CD4-positive, alpha-beta memory T cell (primary cell): ENCODE measurements at regions of chr20 and their contacts with region 1.

Region 1: GRCh38 chr20:43537921-43538877 is 20.6 kb upstream of the SGK2 start:
- DNase-seq: peak in 4 of 5 donors; percentile 15 to 25 (median 21)
- H3K4me3 ChIP-seq: no peak overlapping the region
- H3K4me3 Mint-ChIP-seq: no peak overlapping the region
- H3K27ac ChIP-seq: no peak overlapping the region
- H3K27ac Mint-ChIP-seq: peak overlapping the region in 2 of 7 donors; percentile 3 to 4
- H3K4me1 ChIP-seq: no peaks in the 10 kb centered on the region
- H3K4me1 Mint-ChIP-seq: peaks cover 0 to 2% (median 0%) of the 10 kb centered on the region in 4 donors
- H3K27me3 ChIP-seq: no peaks in the 10 kb centered on the region
- H3K27me3 Mint-ChIP-seq: no peaks in the 10 kb centered on the region

Region 2: DNA sequence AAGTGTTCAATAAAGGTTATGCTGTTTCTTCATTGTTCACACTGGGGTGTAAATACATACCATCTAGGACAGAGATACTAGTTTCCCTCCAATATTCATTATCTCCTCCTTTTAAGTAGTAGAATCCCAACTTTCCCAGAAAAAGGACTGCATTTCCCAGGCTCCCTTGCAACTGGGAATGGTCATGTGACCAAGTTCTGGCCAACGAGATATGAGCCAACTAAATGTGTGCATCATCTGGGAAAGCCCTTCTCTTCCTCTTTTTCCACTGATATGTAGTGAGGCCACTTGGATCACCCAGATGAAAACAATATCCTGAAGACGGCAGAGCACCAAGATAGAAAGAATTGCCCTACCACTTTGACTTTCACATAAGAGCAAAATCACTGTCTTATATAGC is 250.6 kb before region 1 on chr20:
- CTCF ChIA-PET with region 1: no interaction called
- POLR2A ChIA-PET with region 1: no interaction called
- intact Hi-C with region 1: no loop called
- DNase-seq: no peak
- H3K4me3 ChIP-seq: no peak overlapping the region
- H3K4me3 Mint-ChIP-seq: no peak overlapping the region
- H3K27ac ChIP-seq: no peak overlapping the region
- H3K27ac Mint-ChIP-seq: no peak overlapping the region
- H3K4me1 ChIP-seq: no peaks in the 10 kb centered on the region
- H3K4me1 Mint-ChIP-seq: no peaks in the 10 kb centered on the region
- H3K27me3 ChIP-seq: no peaks in the 10 kb centered on the region
- H3K27me3 Mint-ChIP-seq: peaks cover 3 to 6% of the 10 kb centered on the region in 2 donors

Region 3: DNA sequence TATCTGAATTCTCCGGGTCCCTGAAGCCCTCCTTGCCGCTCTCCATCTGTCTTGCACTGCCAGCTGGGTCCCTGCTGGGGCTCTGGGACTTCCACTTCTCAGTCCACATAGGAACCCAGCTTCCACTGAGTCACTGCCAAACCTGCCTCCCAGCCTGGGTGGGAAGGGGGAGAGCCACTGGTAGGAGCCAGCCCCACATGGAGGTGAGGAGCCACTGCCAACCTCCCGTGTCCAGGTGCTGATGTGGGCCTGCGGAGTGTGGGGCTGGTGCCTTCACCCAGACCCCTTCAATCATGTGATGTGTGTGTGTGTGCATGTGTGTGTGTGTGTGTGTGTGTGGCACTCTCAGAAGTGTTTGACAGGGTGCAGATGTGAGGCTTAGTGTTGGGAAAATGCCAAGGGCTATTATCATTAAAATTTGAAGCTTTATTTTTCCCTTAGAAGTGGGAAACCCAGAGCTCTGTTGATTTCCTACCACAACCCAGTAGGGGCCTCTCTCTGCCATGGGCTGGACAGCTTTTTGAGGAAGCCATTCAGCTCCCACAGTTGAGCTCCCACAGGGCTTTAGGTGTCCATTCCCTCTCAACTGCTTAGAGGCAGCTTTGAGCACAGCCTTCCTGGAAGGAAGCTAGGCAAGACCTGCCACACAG is 11.3 kb after region 1 on chr20:
- CTCF ChIA-PET with region 1: interaction called, 11 read pairs
- POLR2A ChIA-PET with region 1: no interaction called
- intact Hi-C with region 1: no loop called
- DNase-seq: no peak
- H3K4me3 ChIP-seq: no peak overlapping the region
- H3K4me3 Mint-ChIP-seq: no peak overlapping the region
- H3K27ac ChIP-seq: no peak overlapping the region
- H3K27ac Mint-ChIP-seq: no peak overlapping the region
- H3K4me1 ChIP-seq: no peaks in the 10 kb centered on the region
- H3K4me1 Mint-ChIP-seq: no peaks in the 10 kb centered on the region
- H3K27me3 ChIP-seq: no peaks in the 10 kb centered on the region
- H3K27me3 Mint-ChIP-seq: peaks cover 2 to 3% of the 10 kb centered on the region in 2 donors

Region 4: GRCh38 chr20:43691928-43692524 is 153.8 kb after region 1 on chr20:
- CTCF ChIA-PET with region 1: interaction called, 16 read pairs
- POLR2A ChIA-PET with region 1: no interaction called
- intact Hi-C with region 1: no loop called
- DNase-seq: peak in 4 of 5 donors; percentile 12 to 30 (median 20)
- H3K4me3 ChIP-seq: no peak overlapping the region
- H3K4me3 Mint-ChIP-seq: no peak overlapping the region
- H3K27ac ChIP-seq: no peak overlapping the region
- H3K27ac Mint-ChIP-seq: no peak overlapping the region
- H3K4me1 ChIP-seq: no peaks in the 10 kb centered on the region
- H3K4me1 Mint-ChIP-seq: peaks cover 0 to 2% (median 0%) of the 10 kb centered on the region in 4 donors
- H3K27me3 ChIP-seq: no peaks in the 10 kb centered on the region
- H3K27me3 Mint-ChIP-seq: no peaks in the 10 kb centered on the region

Region 5: DNA sequence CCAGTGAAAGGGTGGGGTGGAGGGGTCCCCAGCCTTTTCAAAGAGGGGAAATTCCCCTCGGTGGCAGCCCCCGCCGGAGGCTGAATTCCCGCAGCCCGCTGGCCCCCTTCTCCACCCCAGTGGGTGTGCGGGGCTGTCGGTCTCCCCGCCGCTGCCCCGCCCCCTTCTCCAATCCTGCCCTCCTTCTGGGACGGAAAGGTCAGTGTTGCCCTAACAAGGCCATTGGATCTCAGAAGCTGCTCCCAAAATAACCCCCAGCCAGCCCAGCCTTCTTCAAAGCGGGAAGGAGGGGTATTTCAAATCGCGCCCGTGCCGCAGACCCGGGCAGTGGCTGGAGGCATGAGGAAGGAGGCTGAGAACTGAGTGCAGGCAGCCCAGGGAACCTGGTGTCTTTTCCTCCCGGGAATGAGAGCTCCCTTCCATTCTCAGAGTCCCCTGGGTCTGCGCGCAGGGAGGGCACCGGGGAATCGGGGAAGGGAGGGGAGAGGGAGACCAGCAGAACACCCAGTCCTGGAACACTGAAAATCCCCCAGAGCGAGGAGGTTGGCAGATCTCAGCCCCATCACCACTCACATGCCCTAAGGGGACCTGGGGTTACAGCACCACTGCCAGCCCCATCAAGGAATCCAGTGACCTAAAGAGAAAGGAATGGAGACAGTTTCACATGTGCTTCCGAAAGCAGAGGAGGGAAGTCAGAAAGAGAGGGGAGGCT is 649.0 kb after region 1 on chr20 and contains the start of gene JPH2:
- CTCF ChIA-PET with region 1: no interaction called
- POLR2A ChIA-PET with region 1: no interaction called
- intact Hi-C with region 1: loop called (anchors 2 kb)
- DNase-seq: no peak
- H3K4me3 ChIP-seq: no peak within 1 kb of the TSS
- H3K4me3 Mint-ChIP-seq: peak within 1 kb of the TSS in 3 of 8 donors; percentile 5 to 32 (median 15)
- H3K27ac ChIP-seq: no peak within 1 kb of the TSS
- H3K27ac Mint-ChIP-seq: no peak within 1 kb of the TSS
- H3K4me1 ChIP-seq: no peaks in the 10 kb centered on the region
- H3K4me1 Mint-ChIP-seq: peaks cover 1 to 11% (median 5%) of the 10 kb centered on the region in 4 donors
- H3K27me3 ChIP-seq: peaks cover 26% of the 10 kb centered on the region
- H3K27me3 Mint-ChIP-seq: peaks cover 41 to 51% of the 10 kb centered on the region in 2 donors
- total RNA-seq, gene JPH2: not detected